ENCODE measurements at regions of chr18 and their contacts with region 1.

Region 1: GRCh38 chr18:35040988-35041814 is at the start of gene MAPRE2:
- DNase-seq: peak; percentile 100
- ATAC-seq: peak; percentile 76
- H3K4me3 Mint-ChIP-seq: peak within 1 kb of the TSS; percentile 97
- H3K27ac Mint-ChIP-seq: peak within 1 kb of the TSS; percentile 98
- H3K4me1 Mint-ChIP-seq: peaks cover 57% of the 10 kb centered on the region
- H3K27me3 Mint-ChIP-seq: no peaks in the 10 kb centered on the region
- total RNA-seq, gene MAPRE2: 59.4 to 83.8 TPM

Region 2: GRCh38 chr18:33821503-33821902 is 1219.7 kb before region 1 on chr18:
- CTCF ChIA-PET with region 1: no interaction called
- POLR2A ChIA-PET with region 1: no interaction called
- intact Hi-C with region 1: no loop called
- DNase-seq: no peak
- ATAC-seq: no peak
- H3K4me3 Mint-ChIP-seq: no peak overlapping the region
- H3K27ac Mint-ChIP-seq: no peak overlapping the region
- H3K4me1 Mint-ChIP-seq: no peaks in the 10 kb centered on the region
- H3K27me3 Mint-ChIP-seq: no peaks in the 10 kb centered on the region

Region 3: GRCh38 chr18:34857320-34857719 is 183.9 kb before region 1 on chr18:
- CTCF ChIA-PET with region 1: no interaction called
- POLR2A ChIA-PET with region 1: interaction called, 4 read pairs
- intact Hi-C with region 1: loop called (anchors 1 kb)
- DNase-seq: no peak
- ATAC-seq: no peak
- H3K4me3 Mint-ChIP-seq: no peak overlapping the region
- H3K27ac Mint-ChIP-seq: peak overlapping the region; percentile 23
- H3K4me1 Mint-ChIP-seq: peaks cover 35% of the 10 kb centered on the region
- H3K27me3 Mint-ChIP-seq: peaks cover 20% of the 10 kb centered on the region

Region 4: GRCh38 chr18:34985963-34986362 is 55.2 kb before region 1 on chr18:
- CTCF ChIA-PET with region 1: no interaction called
- POLR2A ChIA-PET with region 1: no interaction called
- intact Hi-C with region 1: no loop called
- DNase-seq: no peak
- ATAC-seq: peak; percentile 64
- H3K4me3 Mint-ChIP-seq: no peak overlapping the region
- H3K27ac Mint-ChIP-seq: no peak overlapping the region
- H3K4me1 Mint-ChIP-seq: no peaks in the 10 kb centered on the region
- H3K27me3 Mint-ChIP-seq: peaks cover 3% of the 10 kb centered on the region

Region 5: GRCh38 chr18:35029770-35030169 is 11.4 kb before region 1 on chr18:
- CTCF ChIA-PET with region 1: interaction called, 72 read pairs
- POLR2A ChIA-PET with region 1: interaction called, 18 read pairs
- intact Hi-C with region 1: loop called (anchors 1 kb)
- DNase-seq: no peak
- ATAC-seq: peak; percentile 67
- H3K4me3 Mint-ChIP-seq: peak overlapping the region; percentile 69
- H3K27ac Mint-ChIP-seq: peak overlapping the region; percentile 96
- H3K4me1 Mint-ChIP-seq: peaks cover 61% of the 10 kb centered on the region
- H3K27me3 Mint-ChIP-seq: no peaks in the 10 kb centered on the region

Region 6: GRCh38 chr18:35240664-35241447 is 199.7 kb after region 1 on chr18 and contains the start of gene ZNF397:
- CTCF ChIA-PET with region 1: no interaction called
- POLR2A ChIA-PET with region 1: interaction called, 6 read pairs
- intact Hi-C with region 1: loop called (anchors 1 to 2 kb)
- DNase-seq: peak; percentile 98
- ATAC-seq: peak; percentile 98
- H3K4me3 Mint-ChIP-seq: peak within 1 kb of the TSS; percentile 97
- H3K27ac Mint-ChIP-seq: peak within 1 kb of the TSS; percentile 97
- H3K4me1 Mint-ChIP-seq: peaks cover 31% of the 10 kb centered on the region
- H3K27me3 Mint-ChIP-seq: no peaks in the 10 kb centered on the region
- total RNA-seq, gene ZNF397: 21.3 to 21.9 TPM

Region 7: DNA sequence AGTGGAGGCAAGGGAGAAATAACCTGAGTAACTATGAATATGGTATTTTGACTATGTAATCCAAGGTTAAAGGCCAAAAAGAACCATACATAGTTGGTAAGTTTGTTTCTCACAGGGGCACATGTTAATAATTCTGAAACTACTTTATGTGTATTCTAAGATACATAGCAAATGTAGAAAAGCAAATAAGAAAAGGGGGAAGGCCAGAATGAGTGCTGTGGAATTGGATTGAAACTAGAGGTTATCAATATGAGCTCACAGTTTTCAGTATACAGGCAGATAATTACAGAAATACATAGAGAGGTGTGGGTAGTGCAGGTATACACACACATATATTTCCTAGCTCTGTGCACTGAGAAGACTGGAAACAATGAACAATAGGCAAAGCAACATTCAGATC is 442.8 kb after region 1 on chr18:
- CTCF ChIA-PET with region 1: no interaction called
- POLR2A ChIA-PET with region 1: no interaction called
- intact Hi-C with region 1: loop called in 1 of 2 experiments (anchors 5 kb)
- DNase-seq: no peak
- ATAC-seq: peak; percentile 95
- H3K4me3 Mint-ChIP-seq: no peak overlapping the region
- H3K27ac Mint-ChIP-seq: no peak overlapping the region
- H3K4me1 Mint-ChIP-seq: peaks cover 47% of the 10 kb centered on the region
- H3K27me3 Mint-ChIP-seq: no peaks in the 10 kb centered on the region

Region 8: GRCh38 chr18:36067055-36067957 is 1026.1 kb after region 1 on chr18 and contains the start of gene RPRD1A:
- CTCF ChIA-PET with region 1: no interaction called
- POLR2A ChIA-PET with region 1: no interaction called
- intact Hi-C with region 1: loop called in 1 of 2 experiments (anchors 5 kb)
- DNase-seq: peak; percentile 99
- ATAC-seq: peak; percentile 96
- H3K4me3 Mint-ChIP-seq: peak within 1 kb of the TSS; percentile 78
- H3K27ac Mint-ChIP-seq: peak within 1 kb of the TSS; percentile 89
- H3K4me1 Mint-ChIP-seq: peaks cover 29% of the 10 kb centered on the region
- H3K27me3 Mint-ChIP-seq: peaks cover 3% of the 10 kb centered on the region
- total RNA-seq, gene RPRD1A: 27.9 to 32.1 TPM

Measured in activated CD4-positive, alpha-beta T cell treated with anti-CD3 and anti-CD28 coated beads for 36 hours (primary cell).